ENCODE measurements at regions of chr9 and their contacts with region 1.

Region 1: GRCh38 chr9:98074115-98074990 is 17.8 kb downstream of the NANS start:
- DNase-seq: peak; percentile 71
- CTCF ChIP-seq: peak; percentile 92

Region 2: GRCh38 chr9:97982683-97983588 is 91.4 kb before region 1 on chr9 and contains the start of gene ANP32B:
- in situ Hi-C with region 1: no loop called
- DNase-seq: peak; percentile 97
- CTCF ChIP-seq: peak; percentile 93

Region 3: GRCh38 chr9:98263482-98264357 is 189.4 kb after region 1 on chr9:
- in situ Hi-C with region 1: loop called (anchors 10 kb)
- DNase-seq: peak; percentile 77
- CTCF ChIP-seq: peak; percentile 98

Region 4: DNA sequence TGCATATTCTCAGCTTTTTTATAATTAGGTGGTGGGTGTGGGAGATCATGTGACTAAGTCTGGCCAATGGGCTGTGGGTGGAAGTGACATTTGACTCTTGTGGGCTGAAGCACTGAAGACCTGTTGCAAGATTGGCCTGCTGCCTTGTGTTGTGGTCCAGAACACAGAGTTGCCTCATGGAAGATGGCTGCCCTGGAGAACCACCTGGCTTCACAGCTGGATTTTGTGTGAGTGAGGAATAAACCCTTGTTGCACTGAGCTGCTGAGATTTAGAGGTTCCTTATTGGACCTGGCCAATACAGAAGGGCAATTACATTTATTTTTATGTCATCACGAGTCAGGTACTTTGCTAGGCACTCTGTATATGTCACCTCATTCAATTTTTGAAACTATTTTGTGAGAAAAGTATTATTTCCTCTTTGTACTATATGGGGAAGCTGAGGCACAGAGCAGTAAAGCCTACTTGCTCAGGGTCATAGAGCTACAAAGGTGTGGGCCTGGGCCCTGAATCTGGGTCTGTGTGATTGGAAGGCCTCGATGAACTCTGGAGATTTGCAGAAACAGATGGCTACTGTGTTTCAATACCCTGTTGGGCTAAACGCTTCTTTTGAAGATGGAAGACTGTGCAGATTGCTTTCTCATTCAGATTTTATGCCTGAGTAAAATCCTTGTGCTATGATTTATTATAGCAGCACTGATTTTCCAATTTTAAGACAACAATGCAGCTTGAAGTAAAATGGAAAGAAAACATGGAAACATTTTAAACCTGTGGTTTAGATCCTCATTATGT is 252.3 kb after region 1 on chr9:
- in situ Hi-C with region 1: no loop called
- DNase-seq: no peak
- CTCF ChIP-seq: no peak

Measured in GM13977 (cell line).